ENCODE measurements at regions of chrX and their contacts with region 1.

Region 1: GRCh38 chrX:39427906-39428305 is 626.6 kb downstream of the MID1IP1 start:
- DNase-seq: no peak
- H3K4me3 Mint-ChIP-seq: no peak overlapping the region
- H3K27ac Mint-ChIP-seq: peak overlapping the region; percentile 96
- H3K4me1 Mint-ChIP-seq: peaks cover 60% of the 10 kb centered on the region
- H3K27me3 Mint-ChIP-seq: no peaks in the 10 kb centered on the region

Region 2: DNA sequence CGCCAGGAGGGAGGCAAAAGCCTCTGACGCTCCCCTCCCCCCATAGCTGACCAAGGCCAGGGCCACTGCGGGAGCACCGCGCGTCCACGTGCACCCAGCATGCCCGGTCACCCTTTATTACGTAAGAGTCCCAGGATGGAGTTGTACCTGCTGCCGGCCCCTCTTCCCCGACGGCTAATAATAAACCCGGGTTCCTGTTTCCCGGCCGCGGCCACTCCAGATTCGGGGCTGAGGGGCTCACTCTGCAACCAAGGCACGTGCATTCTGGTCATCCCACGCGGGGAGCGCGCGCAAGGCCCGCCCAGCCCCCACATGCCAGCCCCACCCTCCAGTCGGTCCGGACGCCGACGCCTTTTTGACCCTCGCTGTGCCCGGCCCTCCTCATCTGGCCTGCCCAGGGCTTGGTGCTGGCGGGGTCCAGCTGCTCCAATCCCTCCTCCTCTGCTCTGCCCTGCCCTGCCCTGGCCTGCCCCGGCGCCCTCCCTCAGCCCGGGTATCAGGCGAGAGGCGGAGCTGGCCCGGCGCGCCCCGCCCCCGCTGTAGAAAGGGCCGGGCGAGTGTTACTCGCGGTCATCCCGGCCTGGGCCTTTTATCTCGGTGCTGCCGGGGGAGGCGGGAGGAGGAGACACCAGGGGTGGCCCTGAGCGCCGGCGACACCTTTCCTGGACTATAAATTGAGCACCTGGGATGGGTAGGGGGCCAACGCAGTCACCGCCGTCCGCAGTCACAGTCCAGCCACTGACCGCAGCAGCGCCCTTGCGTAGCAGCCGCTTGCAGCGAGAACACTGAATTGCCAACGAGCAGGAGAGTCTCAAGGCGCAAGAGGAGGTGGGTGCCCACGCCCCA is 624.1 kb before region 1 on chrX:
- intact Hi-C with region 1: loop called (anchors 2 kb)
- DNase-seq: peak; percentile 74
- H3K4me3 Mint-ChIP-seq: peak overlapping the region; percentile 100
- H3K27ac Mint-ChIP-seq: peak overlapping the region; percentile 98
- H3K4me1 Mint-ChIP-seq: peaks cover 15% of the 10 kb centered on the region
- H3K27me3 Mint-ChIP-seq: no peaks in the 10 kb centered on the region

Region 3: DNA sequence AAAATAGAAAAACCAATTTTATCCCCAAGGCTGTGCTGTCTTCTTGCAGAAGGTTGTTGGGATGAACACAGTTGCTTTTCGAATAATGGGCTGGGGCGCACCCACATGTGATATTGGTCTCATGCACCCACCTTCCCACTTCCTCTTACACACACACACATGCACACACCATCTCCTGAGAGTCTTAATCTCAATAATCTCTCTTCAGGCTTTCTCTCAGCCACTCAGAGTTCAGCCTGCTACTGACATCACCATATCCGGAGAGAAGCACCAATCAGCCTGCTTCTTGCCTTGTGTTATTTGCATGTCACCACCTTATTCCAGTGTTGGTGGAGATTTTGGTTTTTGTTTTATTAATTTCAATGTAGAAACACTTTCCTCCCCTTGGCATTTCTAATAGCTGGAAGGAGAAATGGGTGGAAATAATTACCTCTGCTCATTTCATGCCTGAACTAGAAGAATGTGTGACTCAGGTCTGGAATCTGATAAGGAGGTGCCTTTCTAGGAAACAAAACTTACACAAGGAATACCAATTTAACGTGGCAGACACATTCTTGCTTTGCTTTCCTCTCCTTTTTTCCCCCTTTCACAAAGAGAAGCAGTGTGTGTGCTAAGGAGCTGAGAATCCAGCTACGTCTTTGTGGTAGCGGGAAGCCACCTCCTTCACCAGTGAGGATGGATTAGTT is 226.5 kb before region 1 on chrX:
- intact Hi-C with region 1: loop called (anchors 1 kb)
- DNase-seq: peak; percentile 32
- H3K4me3 Mint-ChIP-seq: peak overlapping the region; percentile 69
- H3K27ac Mint-ChIP-seq: peak overlapping the region; percentile 97
- H3K4me1 Mint-ChIP-seq: peaks cover 89% of the 10 kb centered on the region
- H3K27me3 Mint-ChIP-seq: no peaks in the 10 kb centered on the region

Region 4: DNA sequence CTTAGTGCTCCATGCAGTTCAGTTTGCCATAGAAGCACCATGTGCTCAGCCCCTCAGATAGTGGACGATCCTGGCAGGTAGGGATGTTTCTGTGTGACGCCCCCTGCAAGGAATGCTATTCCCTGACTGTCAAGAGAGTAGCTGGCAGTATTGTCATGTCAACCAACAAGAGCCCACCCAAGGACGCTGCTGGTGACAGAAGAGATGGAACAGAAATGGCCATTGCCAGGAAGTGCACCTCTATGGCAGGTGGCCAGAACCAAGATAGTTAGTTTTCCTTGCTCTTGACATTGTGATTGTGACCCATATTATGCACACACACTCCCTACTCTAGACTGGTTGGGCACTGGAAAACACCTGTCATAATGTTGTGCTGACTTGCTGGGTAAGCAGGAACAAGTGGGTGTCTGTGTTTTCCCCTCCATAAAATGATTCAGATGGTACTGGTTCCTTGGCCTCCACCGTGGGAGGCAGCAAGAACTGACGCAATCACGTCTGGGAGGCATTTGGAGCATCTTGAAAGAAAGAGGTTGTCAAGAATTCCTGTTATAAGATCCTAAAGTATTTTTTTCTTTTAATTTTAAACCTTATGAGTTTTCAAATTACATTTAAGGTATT is 118.8 kb before region 1 on chrX:
- intact Hi-C with region 1: loop called (anchors 1 kb)
- DNase-seq: no peak
- H3K4me3 Mint-ChIP-seq: no peak overlapping the region
- H3K27ac Mint-ChIP-seq: peak overlapping the region; percentile 96
- H3K4me1 Mint-ChIP-seq: peaks cover 65% of the 10 kb centered on the region
- H3K27me3 Mint-ChIP-seq: no peaks in the 10 kb centered on the region

Region 5: GRCh38 chrX:39439906-39440798 is 12.2 kb after region 1 on chrX:
- intact Hi-C with region 1: loop called (anchors 2 kb)
- DNase-seq: peak; percentile 11
- H3K4me3 Mint-ChIP-seq: peak overlapping the region; percentile 17
- H3K27ac Mint-ChIP-seq: peak overlapping the region; percentile 95
- H3K4me1 Mint-ChIP-seq: peaks cover 46% of the 10 kb centered on the region
- H3K27me3 Mint-ChIP-seq: no peaks in the 10 kb centered on the region

Region 6: DNA sequence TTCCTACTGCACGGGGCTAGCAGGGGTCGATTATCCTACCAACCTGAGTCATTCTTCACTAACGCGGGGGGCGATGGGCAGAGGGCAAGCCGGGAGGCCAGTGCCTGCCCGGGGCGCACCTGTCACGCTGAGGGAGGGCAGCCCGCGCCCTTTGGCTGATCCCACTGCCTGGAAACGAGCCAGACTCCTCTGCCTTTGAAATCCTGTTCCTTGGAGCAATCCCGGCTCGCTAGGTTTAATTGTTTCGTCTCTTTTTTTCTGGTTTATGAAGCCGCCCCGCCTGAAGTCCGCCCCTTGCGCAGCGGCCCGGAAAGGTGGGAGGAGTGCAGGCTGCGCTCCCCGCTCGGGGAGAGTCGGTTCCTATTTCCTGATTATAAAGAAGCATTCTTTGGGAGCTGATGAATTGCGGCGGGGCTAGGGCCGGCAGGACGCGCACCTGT is 185.6 kb after region 1 on chrX:
- intact Hi-C with region 1: loop called (anchors 1 kb)
- DNase-seq: no peak
- H3K4me3 Mint-ChIP-seq: peak overlapping the region; percentile 85
- H3K27ac Mint-ChIP-seq: peak overlapping the region; percentile 88
- H3K4me1 Mint-ChIP-seq: peaks cover 38% of the 10 kb centered on the region
- H3K27me3 Mint-ChIP-seq: no peaks in the 10 kb centered on the region

Region 7: DNA sequence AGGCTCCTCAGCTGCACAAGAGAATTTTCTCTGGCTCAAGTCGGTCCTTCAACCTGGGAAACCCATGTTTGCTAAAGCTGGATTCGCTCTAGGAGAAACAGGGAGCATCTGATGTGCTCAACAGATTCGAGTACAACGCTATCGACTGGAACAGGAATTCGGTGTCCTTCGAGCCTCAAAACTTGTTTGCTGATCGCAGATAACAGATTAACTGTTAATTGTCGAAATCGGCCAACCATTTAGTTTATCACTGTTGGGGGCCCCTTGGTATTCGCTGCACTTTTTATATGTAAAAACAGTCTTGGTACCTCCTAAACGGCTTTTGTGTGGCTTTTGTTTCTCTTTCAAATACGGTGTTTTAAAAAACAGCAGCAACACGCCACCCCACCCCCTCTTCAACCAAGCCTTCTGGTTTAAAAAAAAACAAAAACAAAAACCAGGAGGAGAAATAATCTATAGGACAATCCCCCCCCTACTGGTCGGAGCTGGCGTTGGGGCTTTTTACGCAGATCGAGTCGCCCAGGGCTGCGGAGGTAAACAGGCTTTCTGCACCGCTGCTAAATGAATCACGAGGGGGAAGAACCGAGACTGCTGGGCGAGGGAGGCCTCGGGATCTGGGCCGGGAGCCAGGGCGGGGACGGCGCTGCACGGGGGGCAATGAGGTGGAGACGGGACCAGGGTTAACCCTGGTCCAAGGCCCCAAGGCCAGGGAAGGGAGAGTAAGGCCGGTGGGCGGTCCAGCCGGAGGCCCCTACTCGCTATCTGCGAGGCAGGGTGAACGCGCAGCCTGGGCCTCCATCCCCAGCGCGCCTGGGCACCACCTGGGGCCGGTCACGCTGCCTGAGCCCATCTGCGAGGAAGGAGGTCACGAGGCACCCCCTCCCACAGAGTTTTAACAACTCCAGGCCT is 741.5 kb after region 1 on chrX:
- intact Hi-C with region 1: loop called (anchors 5 kb)
- DNase-seq: peak; percentile 80
- H3K4me3 Mint-ChIP-seq: peak overlapping the region; percentile 81
- H3K27ac Mint-ChIP-seq: peak overlapping the region; percentile 94
- H3K4me1 Mint-ChIP-seq: peaks cover 37% of the 10 kb centered on the region
- H3K27me3 Mint-ChIP-seq: no peaks in the 10 kb centered on the region